Activated naive CD4-positive, alpha-beta T cell treated with anti-CD3 and anti-CD28 coated beads for 36 hours (primary cell): ENCODE measurements at regions of chr19 and their contacts with region 1.

Region 1: DNA sequence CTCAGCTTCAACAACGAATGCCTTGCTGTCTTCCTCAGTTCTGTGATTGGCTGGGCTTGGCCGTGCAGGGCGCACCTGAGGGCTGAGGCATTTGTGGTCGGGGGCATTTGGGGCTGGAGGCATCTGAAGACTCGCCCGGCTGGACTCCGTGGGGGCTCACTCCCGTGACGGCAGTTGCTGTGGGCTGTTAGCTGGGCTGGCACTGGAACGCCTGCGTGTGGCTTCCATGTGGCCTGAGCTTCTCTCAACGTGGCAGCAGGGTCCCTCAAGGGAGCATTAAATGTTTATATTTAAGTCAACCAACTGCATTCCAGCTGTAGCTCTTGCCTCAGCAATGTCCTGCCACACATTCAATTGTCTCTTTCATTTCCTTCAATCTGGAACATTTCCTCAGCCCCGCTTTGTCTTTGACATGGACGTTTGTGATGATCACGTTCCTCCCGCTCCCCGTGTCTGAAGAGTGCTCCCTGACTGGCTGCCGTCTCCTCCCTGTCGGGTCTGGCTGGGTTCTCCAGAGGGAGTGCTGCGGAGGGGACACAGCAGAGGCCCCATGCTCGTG is 21.0 kb downstream of the CCDC8 start:
- DNase-seq: no peak
- H3K4me3 Mint-ChIP-seq: no peak overlapping the region
- H3K27ac Mint-ChIP-seq: no peak overlapping the region
- H3K4me1 Mint-ChIP-seq: peaks cover 1% of the 10 kb centered on the region
- H3K27me3 Mint-ChIP-seq: no peaks in the 10 kb centered on the region

Region 2: DNA sequence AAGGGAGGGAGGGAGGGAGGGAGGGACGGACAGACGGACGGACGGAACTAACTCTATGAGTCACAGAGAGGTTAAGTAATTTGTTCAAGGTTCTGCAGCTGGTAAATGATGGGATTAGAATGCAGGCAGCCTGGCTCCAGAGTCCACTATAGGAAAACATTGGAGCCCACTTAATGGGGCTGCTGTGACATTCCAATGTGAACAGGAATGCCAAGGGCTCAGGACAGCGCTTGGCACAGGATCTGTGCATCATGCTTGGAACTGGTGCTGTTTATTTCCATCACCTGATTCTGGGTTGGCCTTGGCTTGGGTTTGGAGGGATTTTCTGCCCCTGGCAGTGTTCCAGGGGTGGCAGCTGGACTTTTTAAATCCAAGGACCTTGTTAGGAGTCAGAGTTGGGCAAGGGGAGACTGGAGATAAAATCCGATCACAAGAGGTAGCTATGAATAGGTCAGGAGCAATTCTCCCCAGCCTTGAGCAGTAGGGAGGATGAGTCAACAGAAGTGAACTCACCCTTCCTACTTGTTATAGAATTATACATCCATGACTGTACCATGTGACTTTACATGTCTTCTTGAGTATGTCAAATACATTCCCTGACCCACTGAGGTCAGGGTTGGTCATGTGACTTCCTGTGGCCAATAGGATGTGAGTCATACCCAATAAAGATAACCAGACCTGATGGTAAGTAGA is 103.3 kb before region 1 on chr19:
- CTCF ChIA-PET with region 1: no interaction called
- intact Hi-C with region 1: loop called (anchors 10 kb)
- DNase-seq: no peak
- H3K4me3 Mint-ChIP-seq: no peak overlapping the region
- H3K27ac Mint-ChIP-seq: no peak overlapping the region
- H3K4me1 Mint-ChIP-seq: no peaks in the 10 kb centered on the region
- H3K27me3 Mint-ChIP-seq: no peaks in the 10 kb centered on the region

Region 3: GRCh38 chr19:46328079-46328478 is 64.2 kb before region 1 on chr19:
- CTCF ChIA-PET with region 1: no interaction called
- intact Hi-C with region 1: no loop called
- DNase-seq: no peak
- H3K4me3 Mint-ChIP-seq: no peak overlapping the region
- H3K27ac Mint-ChIP-seq: no peak overlapping the region
- H3K4me1 Mint-ChIP-seq: no peaks in the 10 kb centered on the region
- H3K27me3 Mint-ChIP-seq: peaks cover 2% of the 10 kb centered on the region